ENCODE measurements at regions of chr2 and their contacts with region 1.

Region 1: DNA sequence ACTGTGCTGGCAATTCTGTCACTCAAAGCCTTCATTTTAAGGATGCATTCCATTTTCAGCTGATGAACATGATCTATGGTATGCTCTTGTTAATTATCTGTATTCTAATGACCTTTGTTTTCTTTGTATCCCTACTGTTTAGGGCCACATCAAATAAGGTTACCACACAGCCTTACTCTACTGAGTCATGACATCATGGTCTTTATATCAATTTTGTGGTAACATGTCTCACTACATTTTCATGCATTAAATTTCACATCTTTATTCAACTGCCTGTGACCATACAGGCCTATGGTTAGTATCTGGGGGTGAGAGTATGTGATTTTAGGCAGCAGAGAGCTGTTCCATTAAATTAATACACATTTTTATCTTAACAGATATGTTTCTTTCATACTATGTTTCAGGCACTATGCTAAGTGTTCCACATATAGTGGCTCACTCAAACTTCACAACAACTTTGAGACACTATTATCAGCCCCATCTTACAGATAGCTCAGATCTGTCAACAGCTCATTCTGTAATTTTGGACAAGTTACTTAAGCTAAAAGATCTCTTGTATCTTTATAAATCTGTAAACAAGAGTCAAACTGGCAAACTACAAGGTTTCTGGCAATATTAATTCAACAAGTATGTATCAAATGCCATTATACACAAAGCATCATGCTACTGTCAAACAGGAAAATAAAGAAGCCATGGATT is 18.0 kb downstream of the LRPPRC start:
- DNase-seq: no peak
- H3K4me3 ChIP-seq: no peak overlapping the region
- H3K27ac ChIP-seq: no peak overlapping the region
- H3K4me1 ChIP-seq: no peaks in the 10 kb centered on the region
- H3K27me3 ChIP-seq: no peaks in the 10 kb centered on the region
- CTCF ChIP-seq: no peak

Region 2: DNA sequence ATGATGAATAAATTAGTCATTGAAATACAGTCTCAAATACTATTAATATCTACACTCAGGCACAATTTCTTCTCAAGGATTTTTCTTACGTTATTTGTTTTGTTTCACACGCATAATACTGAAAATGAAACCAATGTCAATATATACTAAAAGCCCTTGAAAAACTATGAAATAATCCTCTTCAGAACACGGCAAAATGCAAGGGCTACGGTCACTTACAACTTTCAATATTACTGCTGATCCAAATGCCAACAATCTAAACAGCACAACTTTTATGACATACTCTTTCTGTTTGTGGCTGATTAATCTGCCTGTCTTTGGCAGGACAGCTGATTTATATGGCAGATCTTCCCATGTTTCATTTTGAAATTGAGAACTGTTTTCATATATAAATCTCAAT is 50.4 kb before region 1 on chr2:
- intact Hi-C with region 1: loop called (anchors 10 kb)
- DNase-seq: no peak
- H3K4me3 ChIP-seq: no peak overlapping the region
- H3K27ac ChIP-seq: no peak overlapping the region
- H3K4me1 ChIP-seq: no peaks in the 10 kb centered on the region
- H3K27me3 ChIP-seq: no peaks in the 10 kb centered on the region
- CTCF ChIP-seq: no peak

Region 3: DNA sequence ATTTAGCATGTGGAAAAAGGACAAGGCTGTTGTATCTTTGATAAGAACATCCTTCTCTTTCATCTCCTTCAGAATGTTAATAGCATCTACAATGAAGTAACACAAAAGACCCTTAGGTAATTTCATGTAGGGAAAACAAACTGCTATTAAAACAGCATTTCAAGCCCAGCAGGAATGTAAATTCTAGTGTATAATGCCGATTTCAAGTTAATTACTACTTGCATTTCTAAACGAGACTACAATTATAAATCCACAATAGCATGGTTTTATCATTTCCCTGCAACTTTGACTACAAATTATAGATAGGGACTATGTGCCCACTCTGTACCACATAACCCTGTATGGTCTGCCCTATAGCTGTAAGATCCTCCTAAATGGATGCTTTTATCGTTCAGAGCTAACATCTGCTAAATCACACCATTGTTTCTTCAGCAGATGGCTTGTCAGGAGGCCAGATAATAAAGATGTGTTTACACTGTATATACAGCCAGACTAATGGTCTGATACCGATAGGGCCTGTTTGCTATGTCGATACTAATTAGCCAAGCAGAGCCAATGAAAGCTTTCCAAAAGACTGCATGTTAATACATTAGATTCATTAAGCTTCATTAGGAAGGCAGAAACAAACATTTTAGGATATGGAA is 33.9 kb before region 1 on chr2:
- intact Hi-C with region 1: loop called (anchors 5 kb)
- DNase-seq: no peak
- H3K4me3 ChIP-seq: no peak overlapping the region
- H3K27ac ChIP-seq: no peak overlapping the region
- H3K4me1 ChIP-seq: no peaks in the 10 kb centered on the region
- H3K27me3 ChIP-seq: no peaks in the 10 kb centered on the region
- CTCF ChIP-seq: no peak

Region 4: GRCh38 chr2:44051593-44052347 is 73.9 kb after region 1 on chr2:
- intact Hi-C with region 1: no loop called
- DNase-seq: no peak
- H3K4me3 ChIP-seq: no peak overlapping the region
- H3K27ac ChIP-seq: no peak overlapping the region
- H3K4me1 ChIP-seq: no peaks in the 10 kb centered on the region
- H3K27me3 ChIP-seq: no peaks in the 10 kb centered on the region
- CTCF ChIP-seq: no peak